GM12878 (cell line): ENCODE measurements at regions of chr14 and their contacts with region 1.

Region 1: GRCh38 chr14:72948481-72949138 is 22.3 kb downstream of the DCAF4 start:
- DNase-seq: peak; percentile 11
- ATAC-seq: peak; percentile 85
- H3K4me3 ChIP-seq: no peak overlapping the region
- H3K27ac ChIP-seq: no peak overlapping the region
- H3K4me1 ChIP-seq: no peaks in the 10 kb centered on the region
- H3K27me3 ChIP-seq: no peaks in the 10 kb centered on the region
- CTCF ChIP-seq: peak; percentile 77 to 89 (median 83)
- EP300 ChIP-seq: no peak
- POLR2A ChIP-seq: no peak
- RAD21 ChIP-seq: peak; percentile 55

Region 2: DNA sequence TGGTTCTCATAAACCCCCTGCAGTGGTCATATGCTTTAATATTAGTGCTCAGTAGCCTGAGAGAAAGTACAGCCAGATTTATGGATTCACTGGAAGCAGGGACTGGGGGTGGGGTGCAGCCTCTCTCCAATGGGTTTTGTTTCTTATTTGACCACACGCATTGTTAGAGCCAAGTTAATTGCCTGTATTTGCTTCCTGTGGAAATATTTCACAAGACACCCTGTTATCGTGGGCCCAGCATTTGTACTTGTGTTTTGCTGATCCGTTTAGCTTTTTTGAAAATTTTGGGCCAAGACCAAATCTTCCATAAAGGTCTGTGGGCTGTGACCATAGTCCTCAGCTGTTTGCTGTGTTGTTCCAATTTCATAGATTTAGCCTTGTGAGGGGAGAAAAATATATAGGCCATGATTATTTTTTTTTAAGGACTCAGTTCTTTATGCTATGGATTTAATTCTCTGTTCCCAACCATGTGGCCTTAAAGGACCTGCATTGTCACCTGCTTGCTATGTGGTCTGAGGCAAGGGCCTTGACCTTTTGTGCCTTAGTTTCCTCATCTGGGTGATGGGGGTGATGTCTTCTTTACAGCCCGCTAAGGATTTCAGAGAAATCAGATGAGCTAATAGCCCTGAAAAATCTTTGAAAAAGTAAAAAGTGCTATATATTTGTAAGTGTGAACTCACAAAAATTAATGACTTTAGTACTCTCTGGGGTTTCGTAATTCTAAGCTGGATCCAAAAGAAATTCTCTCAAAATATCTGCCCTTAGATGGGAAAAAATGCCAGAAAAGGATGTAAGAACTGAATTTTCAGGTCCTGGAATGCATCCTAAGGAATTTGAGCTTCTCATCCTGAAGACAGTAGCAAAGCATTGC is 425.0 kb before region 1 on chr14:
- CTCF ChIA-PET with region 1: interaction called, 205 read pairs
- POLR2A ChIA-PET with region 1: no interaction called
- RAD21 ChIA-PET with region 1: interaction called, 3 read pairs
- SMC1A ChIA-PET with region 1: interaction called, 3 read pairs
- in situ Hi-C with region 1: no loop called
- intact Hi-C with region 1: no loop called
- DNase-seq: no peak
- ATAC-seq: no peak
- H3K4me3 ChIP-seq: no peak overlapping the region
- H3K27ac ChIP-seq: no peak overlapping the region
- H3K4me1 ChIP-seq: peaks cover 29% of the 10 kb centered on the region
- H3K27me3 ChIP-seq: no peaks in the 10 kb centered on the region
- CTCF ChIP-seq: no peak
- EP300 ChIP-seq: no peak
- POLR2A ChIP-seq: no peak
- RAD21 ChIP-seq: no peak

Region 3: DNA sequence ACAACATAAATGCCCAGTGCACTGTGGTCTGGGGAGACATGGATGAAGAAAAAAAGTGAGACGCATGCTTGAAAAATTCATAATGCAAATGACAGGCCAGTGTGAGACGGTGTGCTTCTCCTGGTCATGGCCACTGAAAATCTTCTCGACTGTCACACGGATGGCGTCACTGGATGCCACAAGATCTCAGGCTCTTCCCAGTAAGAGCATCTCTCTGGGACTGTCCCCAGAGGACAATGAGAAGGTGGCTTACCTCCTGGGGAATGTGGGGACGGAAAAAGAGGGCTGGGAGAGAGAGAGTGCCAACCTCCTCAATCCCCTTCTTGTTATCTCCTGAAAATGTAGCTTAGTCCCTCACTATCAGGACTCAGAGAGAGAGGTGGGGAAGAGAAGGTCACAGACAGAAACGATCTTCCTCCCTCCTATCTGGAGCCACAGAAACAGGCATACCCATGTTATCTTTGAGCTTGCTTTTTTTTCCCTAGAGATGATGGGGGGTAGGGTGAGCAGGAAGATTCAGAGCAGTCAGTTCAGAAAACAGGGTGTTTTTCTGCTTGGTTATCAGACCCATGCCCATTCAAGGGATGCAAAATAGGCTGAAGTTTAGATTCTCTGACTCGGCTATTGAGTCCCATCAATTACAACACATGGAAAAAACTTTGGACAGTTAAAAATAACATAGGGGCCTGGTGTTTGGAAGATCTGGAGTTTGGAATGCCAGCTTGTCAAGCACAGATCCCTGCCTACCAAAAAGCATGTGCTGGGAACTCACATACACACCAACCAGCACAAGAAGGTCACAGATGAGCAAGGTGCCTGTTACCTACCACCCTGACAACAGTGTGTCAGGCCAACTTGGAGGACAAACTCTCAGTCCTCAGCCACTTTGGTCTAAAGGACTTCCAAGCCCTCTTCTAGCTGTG is 78.9 kb before region 1 on chr14:
- CTCF ChIA-PET with region 1: no interaction called
- POLR2A ChIA-PET with region 1: no interaction called
- RAD21 ChIA-PET with region 1: no interaction called
- SMC1A ChIA-PET with region 1: no interaction called
- in situ Hi-C with region 1: no loop called
- intact Hi-C with region 1: no loop called
- DNase-seq: no peak
- ATAC-seq: no peak
- H3K4me3 ChIP-seq: no peak overlapping the region
- H3K27ac ChIP-seq: no peak overlapping the region
- H3K4me1 ChIP-seq: no peaks in the 10 kb centered on the region
- H3K27me3 ChIP-seq: no peaks in the 10 kb centered on the region
- CTCF ChIP-seq: no peak
- EP300 ChIP-seq: no peak
- POLR2A ChIP-seq: no peak
- RAD21 ChIP-seq: no peak

Region 4: DNA sequence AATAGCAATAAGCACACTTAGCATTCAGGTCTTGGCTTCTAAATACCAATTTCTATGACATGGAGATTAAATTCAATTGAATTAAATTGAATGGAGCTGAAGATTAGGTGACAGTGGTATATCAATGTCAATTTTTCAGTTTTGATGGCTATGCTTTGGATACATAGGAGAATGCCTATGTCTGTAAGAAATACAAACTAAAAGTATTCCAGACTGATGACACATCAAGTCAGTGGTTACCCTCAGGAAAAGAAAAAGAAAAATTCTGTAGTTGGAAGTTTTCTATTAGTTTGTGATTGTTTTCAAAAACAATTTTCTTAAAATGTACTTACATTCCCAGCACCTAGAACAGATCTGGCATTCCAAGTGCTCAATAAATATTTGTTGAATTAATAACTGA is 27.2 kb before region 1 on chr14:
- CTCF ChIA-PET with region 1: interaction called, 11 read pairs
- POLR2A ChIA-PET with region 1: interaction called, 4 read pairs
- RAD21 ChIA-PET with region 1: no interaction called
- SMC1A ChIA-PET with region 1: interaction called, 9 read pairs
- in situ Hi-C with region 1: no loop called
- intact Hi-C with region 1: no loop called
- DNase-seq: no peak
- ATAC-seq: no peak
- H3K4me3 ChIP-seq: no peak overlapping the region
- H3K27ac ChIP-seq: no peak overlapping the region
- H3K4me1 ChIP-seq: no peaks in the 10 kb centered on the region; the same call in 1 of the 2 replicates
- H3K27me3 ChIP-seq: no peaks in the 10 kb centered on the region; a peak in 1 of 4 replicates
- CTCF ChIP-seq: no peak
- EP300 ChIP-seq: no peak
- POLR2A ChIP-seq: no peak
- RAD21 ChIP-seq: no peak

Region 5: GRCh38 chr14:72966038-72966437 is 17.4 kb after region 1 on chr14:
- CTCF ChIA-PET with region 1: interaction called, 11 read pairs
- POLR2A ChIA-PET with region 1: no interaction called
- RAD21 ChIA-PET with region 1: no interaction called
- SMC1A ChIA-PET with region 1: no interaction called
- in situ Hi-C with region 1: no loop called
- intact Hi-C with region 1: no loop called
- DNase-seq: no peak
- ATAC-seq: no peak
- H3K4me3 ChIP-seq: no peak overlapping the region
- H3K27ac ChIP-seq: no peak overlapping the region
- H3K4me1 ChIP-seq: no peaks in the 10 kb centered on the region; the same call in 1 of the 2 replicates
- H3K27me3 ChIP-seq: no peaks in the 10 kb centered on the region
- CTCF ChIP-seq: no peak
- EP300 ChIP-seq: no peak
- POLR2A ChIP-seq: no peak
- RAD21 ChIP-seq: no peak

Region 6: DNA sequence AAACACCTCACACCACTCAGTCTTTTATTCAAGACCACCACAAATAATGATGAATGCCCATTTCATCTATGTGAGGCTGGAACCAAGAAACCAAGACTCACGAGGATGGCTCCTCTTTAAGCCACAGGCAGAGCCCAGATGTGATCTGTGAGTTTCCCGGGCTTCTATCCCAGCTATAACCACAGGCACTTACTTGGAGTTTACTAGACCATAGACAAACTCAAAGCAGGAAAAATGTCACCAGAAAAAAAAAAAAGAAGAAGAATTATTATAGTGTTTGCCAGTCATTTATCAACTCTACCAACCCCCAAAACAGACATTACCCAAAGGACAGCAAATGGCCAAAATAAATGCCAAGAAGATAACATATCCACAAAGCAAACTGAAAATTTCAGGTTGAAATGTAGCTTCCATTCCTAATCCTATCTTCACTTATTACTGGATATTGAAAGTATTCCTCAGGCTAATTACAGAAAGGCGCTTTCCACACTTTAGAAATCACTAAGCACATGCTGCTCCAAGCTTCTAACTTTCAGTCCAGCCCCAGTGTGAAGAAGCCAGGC is 33.6 kb after region 1 on chr14:
- CTCF ChIA-PET with region 1: no interaction called
- POLR2A ChIA-PET with region 1: no interaction called
- RAD21 ChIA-PET with region 1: no interaction called
- SMC1A ChIA-PET with region 1: no interaction called
- in situ Hi-C with region 1: no loop called
- intact Hi-C with region 1: no loop called
- DNase-seq: no peak
- ATAC-seq: no peak
- H3K4me3 ChIP-seq: no peak overlapping the region
- H3K27ac ChIP-seq: no peak overlapping the region
- H3K4me1 ChIP-seq: no peaks in the 10 kb centered on the region
- H3K27me3 ChIP-seq: no peaks in the 10 kb centered on the region
- CTCF ChIP-seq: no peak
- EP300 ChIP-seq: no peak
- POLR2A ChIP-seq: no peak
- RAD21 ChIP-seq: no peak